Endothelial cell of umbilical vein (primary cell): ENCODE measurements at regions of chr2 and their contacts with region 1.

Region 1: GRCh38 chr2:236787885-236788284 is 218.3 kb downstream of the ACKR3 start:
- DNase-seq: no peak
- H3K4me3 ChIP-seq: no peak overlapping the region
- H3K27ac ChIP-seq: no peak overlapping the region
- H3K4me1 ChIP-seq: peaks cover 3% of the 10 kb centered on the region
- H3K27me3 ChIP-seq: peaks cover 0 to 12% of the 10 kb centered on the region in 2 experiments
- CTCF ChIP-seq: no peak
- POLR2A ChIP-seq: no peak

Region 2: DNA sequence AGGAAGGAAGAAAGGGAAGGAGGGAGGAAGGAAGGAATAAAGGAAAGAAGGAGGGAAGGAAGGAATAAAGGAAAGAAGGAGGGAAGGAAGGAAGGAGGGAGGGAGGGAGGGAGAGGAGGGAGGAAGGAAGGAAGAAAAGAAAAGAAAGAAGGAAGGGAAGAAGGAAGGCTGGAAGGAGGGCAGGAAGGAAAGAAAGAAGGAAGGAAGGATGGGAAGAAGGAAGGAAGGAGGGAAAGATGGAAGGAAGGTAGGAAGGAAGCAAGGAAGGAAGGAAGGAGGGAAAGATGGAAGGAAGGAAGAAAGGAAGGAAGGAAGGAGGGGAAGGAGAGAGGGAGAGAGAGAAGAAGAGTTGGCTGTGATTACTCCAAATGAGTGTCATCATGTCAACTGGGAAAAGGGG is 27.6 kb before region 1 on chr2:
- CTCF ChIA-PET with region 1: no interaction called
- POLR2A ChIA-PET with region 1: no interaction called
- dilution Hi-C with region 1: no loop called
- intact Hi-C with region 1: loop called (anchors 1 kb)
- DNase-seq: no peak
- H3K4me3 ChIP-seq: no peak overlapping the region
- H3K27ac ChIP-seq: no peak overlapping the region
- H3K4me1 ChIP-seq: no peaks in the 10 kb centered on the region
- H3K27me3 ChIP-seq: no peaks in the 10 kb centered on the region
- CTCF ChIP-seq: no peak
- POLR2A ChIP-seq: no peak

Region 3: DNA sequence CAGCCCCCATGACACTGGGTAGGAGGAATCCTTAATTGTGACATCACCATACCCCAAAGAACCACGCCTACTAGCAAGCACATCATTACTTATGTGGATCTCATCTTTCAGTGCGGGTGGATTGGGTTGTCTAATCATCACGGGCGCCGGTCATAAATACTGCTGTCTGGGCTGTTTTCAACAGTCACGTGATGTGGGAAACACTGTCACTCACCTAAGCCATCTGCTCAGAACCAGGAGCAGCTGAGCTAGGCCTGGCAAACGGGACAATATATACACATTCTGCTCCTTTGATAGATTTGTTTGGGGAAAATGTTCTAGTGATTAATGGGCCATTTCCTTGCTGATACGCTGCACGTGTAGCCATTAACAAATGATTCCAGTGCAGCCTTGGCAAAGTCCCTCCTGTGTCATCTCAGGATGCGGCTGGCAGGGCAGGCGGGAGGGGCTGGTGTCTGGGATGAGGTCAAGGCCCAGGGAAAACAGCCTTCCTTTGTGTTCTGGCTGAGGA is 151.9 kb after region 1 on chr2:
- CTCF ChIA-PET with region 1: no interaction called
- POLR2A ChIA-PET with region 1: no interaction called
- dilution Hi-C with region 1: no loop called
- intact Hi-C with region 1: no loop called
- DNase-seq: peak; percentile 94
- H3K4me3 ChIP-seq: no peak overlapping the region
- H3K27ac ChIP-seq: no peak overlapping the region
- H3K4me1 ChIP-seq: peaks cover 4% of the 10 kb centered on the region
- H3K27me3 ChIP-seq: no peaks in the 10 kb centered on the region
- CTCF ChIP-seq: no peak
- POLR2A ChIP-seq: no peak